ENCODE measurements at regions of chr19 and their contacts with region 1.

Region 1: DNA sequence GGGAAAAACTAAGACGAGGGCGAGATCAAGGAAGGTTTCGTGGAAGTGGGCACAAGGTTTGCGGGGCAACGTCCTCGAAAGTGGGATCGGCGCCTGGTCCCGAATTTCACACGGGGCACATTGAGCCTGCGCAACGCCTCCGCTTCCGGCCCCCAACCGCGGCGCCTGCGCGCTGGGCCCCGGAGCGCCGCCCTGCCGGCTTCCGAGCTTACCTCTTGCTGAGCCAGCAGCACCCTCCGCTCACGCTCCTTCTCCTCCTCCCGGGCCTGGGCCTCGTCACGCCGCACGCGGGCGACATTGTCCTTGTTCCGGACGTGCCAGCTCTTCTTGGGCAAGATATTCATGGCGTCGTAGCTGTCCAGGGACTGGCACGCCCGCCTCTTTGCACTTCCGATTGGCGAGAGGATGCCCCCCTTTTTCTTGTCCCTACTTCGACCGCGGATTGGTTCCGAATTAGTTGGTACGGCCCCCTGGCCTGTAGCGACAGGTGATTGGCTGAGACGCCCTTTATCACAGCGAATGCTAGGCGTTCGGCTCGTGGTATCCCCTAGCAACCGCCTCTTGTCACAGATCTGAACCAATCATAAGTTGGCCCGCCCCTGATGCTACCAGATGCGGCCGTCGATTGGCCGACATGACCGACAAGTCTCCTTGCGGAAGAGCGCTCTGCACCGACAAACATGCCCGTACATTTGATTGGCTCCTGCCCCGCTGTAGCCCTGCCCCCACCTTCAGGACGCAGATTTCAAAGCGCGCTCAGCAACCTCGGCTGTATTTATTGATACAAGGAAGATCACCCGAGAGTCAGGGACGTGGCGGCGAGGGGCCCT is at the start of gene LENG1:
- DNase-seq: peak; percentile 97 to 100 (median 100)
- H3K4me3 ChIP-seq: peak within 1 kb of the TSS; percentile 61 to 99
- H3K4me3 Mint-ChIP-seq: peak within 1 kb of the TSS; percentile 99 to 100 (median 100)
- H3K27ac ChIP-seq: peak within 1 kb of the TSS; percentile 78
- H3K27ac Mint-ChIP-seq: peak within 1 kb of the TSS; percentile 93 to 100 (median 100)
- H3K4me1 ChIP-seq: peaks cover 75% of the 10 kb centered on the region
- H3K4me1 Mint-ChIP-seq: peaks cover 39 to 85% (median 58%) of the 10 kb centered on the region in 4 donors
- H3K27me3 ChIP-seq: no peaks in the 10 kb centered on the region
- H3K27me3 Mint-ChIP-seq: no peaks in the 10 kb centered on the region
- total RNA-seq, gene LENG1: 19.6 to 22.7 TPM

Region 2: GRCh38 chr19:54102421-54103169 is 57.0 kb before region 1 on chr19 and contains the start of gene NDUFA3:
- CTCF ChIA-PET with region 1: no interaction called
- POLR2A ChIA-PET with region 1: interaction called, 6 read pairs
- intact Hi-C with region 1: loop called (anchors 1 kb)
- DNase-seq: peak; percentile 96 to 99 (median 98)
- H3K4me3 ChIP-seq: peak within 1 kb of the TSS; percentile 54 to 83
- H3K4me3 Mint-ChIP-seq: peak within 1 kb of the TSS; percentile 95 to 100 (median 97)
- H3K27ac ChIP-seq: peak within 1 kb of the TSS; percentile 65
- H3K27ac Mint-ChIP-seq: peak within 1 kb of the TSS; percentile 81 to 98 (median 96)
- H3K4me1 ChIP-seq: peaks cover 17% of the 10 kb centered on the region
- H3K4me1 Mint-ChIP-seq: peaks cover 14 to 29% (median 19%) of the 10 kb centered on the region in 4 donors
- H3K27me3 ChIP-seq: no peaks in the 10 kb centered on the region
- H3K27me3 Mint-ChIP-seq: no peaks in the 10 kb centered on the region
- total RNA-seq, gene NDUFA3: 135 to 137 TPM

Region 3: GRCh38 chr19:54147676-54148075 is 11.9 kb before region 1 on chr19:
- CTCF ChIA-PET with region 1: no interaction called
- POLR2A ChIA-PET with region 1: interaction called, 28 read pairs
- intact Hi-C with region 1: no loop called
- DNase-seq: no peak
- H3K4me3 ChIP-seq: no peak overlapping the region
- H3K4me3 Mint-ChIP-seq: no peak overlapping the region
- H3K27ac ChIP-seq: no peak overlapping the region
- H3K27ac Mint-ChIP-seq: peak overlapping the region in 1 of 7 donors; percentile 68
- H3K4me1 ChIP-seq: peaks cover 2% of the 10 kb centered on the region
- H3K4me1 Mint-ChIP-seq: peaks cover 0 to 5% (median 4%) of the 10 kb centered on the region in 4 donors
- H3K27me3 ChIP-seq: no peaks in the 10 kb centered on the region
- H3K27me3 Mint-ChIP-seq: no peaks in the 10 kb centered on the region

Region 4: DNA sequence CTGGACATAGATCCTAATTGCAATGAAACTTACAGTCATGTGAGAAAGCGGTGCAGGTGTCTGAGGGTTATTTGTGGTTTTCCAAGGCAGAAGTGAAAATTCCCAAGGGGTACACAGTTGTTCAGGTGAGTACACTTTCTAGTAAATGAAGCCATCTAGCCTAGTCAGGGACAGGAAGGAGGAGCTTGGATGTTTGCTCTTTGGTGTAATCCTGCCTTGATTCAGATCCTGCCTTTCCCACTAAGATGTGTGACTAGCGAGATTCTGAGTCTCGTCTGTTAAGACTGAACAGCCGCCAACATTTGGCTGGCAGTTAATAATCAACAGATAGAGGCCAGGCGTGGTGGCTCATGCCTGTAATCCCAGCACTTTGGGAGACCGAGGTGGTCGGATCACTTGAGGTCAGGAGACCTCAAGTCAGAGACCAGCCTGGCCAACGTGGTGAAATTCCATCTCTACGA is 43.6 kb after region 1 on chr19:
- CTCF ChIA-PET with region 1: no interaction called
- POLR2A ChIA-PET with region 1: interaction called, 22 read pairs
- intact Hi-C with region 1: loop called (anchors 1 kb)
- DNase-seq: no peak
- H3K4me3 ChIP-seq: no peak overlapping the region
- H3K4me3 Mint-ChIP-seq: peak overlapping the region; percentile 10 to 100 (median 64)
- H3K27ac ChIP-seq: peak overlapping the region; percentile 89
- H3K27ac Mint-ChIP-seq: peak overlapping the region in 6 of 7 donors; percentile 66 to 99 (median 85)
- H3K4me1 ChIP-seq: peaks cover 74% of the 10 kb centered on the region
- H3K4me1 Mint-ChIP-seq: peaks cover 44 to 86% (median 62%) of the 10 kb centered on the region in 4 donors
- H3K27me3 ChIP-seq: no peaks in the 10 kb centered on the region
- H3K27me3 Mint-ChIP-seq: no peaks in the 10 kb centered on the region